ENCODE measurements at regions of chr9 and their contacts with region 1.

Region 1: DNA sequence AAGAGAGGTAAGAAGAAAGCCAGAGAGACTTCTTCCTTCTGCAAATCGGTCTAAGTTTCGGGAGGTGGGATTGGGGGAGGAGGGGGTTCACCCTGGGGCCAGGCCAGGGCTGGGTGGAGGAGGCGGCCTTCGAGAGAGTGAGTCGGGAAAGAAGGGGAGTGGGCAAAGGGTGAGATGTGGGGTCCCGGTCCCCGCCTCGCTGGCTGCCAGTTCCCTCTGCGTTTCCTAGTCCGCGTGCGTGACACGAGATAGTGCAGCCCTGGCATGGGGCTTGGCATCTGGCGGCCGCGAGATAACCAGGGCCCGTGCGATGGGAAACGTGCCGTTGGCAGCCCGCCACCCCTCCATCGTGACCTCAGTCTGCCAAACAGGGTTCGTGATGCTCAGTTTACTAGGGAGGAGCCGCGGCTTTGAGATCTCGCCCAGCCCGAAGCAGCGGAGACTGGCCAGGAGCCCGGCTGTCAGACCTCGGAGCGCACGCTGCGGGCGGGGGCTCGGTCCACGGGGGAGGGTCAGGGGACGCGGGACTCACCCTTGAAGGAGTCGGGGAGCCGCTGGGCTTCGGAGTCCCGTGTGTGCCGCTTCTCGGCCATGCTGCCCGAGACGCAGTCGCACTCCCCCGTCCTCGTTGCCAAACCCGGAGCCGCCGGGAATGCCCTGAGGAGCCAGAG is at the start of gene STOM:
- DNase-seq: peak; percentile 74
- H3K4me3 Mint-ChIP-seq: peak within 1 kb of the TSS; percentile 82
- H3K27ac Mint-ChIP-seq: peak within 1 kb of the TSS; percentile 88
- H3K4me1 Mint-ChIP-seq: peaks cover 31% of the 10 kb centered on the region
- H3K27me3 Mint-ChIP-seq: no peaks in the 10 kb centered on the region
- total RNA-seq, gene STOM: 34.0 to 37.7 TPM

Region 2: DNA sequence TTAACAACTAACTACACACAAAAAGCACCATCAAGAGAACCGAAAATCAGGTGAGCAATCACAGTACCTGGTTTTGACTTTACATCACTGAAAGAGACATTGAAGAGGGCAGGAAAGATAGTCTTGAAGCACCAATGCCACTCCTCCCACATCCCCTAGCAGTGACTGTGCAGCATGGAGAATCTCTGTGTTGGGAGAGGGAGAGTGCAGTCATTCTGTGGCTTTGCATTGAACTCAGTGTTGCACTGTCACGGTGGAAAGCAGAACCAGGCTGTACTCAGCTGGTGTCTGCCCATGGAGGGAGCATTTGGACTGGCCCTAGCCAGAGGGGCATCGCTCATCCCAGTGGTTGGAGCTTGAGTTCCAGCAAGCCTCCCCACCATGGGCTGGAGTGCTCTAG is 360.1 kb before region 1 on chr9:
- CTCF ChIA-PET with region 1: no interaction called
- intact Hi-C with region 1: no loop called
- DNase-seq: peak; percentile 20
- H3K4me3 Mint-ChIP-seq: no peak overlapping the region
- H3K27ac Mint-ChIP-seq: no peak overlapping the region
- H3K4me1 Mint-ChIP-seq: no peaks in the 10 kb centered on the region
- H3K27me3 Mint-ChIP-seq: no peaks in the 10 kb centered on the region

Region 3: DNA sequence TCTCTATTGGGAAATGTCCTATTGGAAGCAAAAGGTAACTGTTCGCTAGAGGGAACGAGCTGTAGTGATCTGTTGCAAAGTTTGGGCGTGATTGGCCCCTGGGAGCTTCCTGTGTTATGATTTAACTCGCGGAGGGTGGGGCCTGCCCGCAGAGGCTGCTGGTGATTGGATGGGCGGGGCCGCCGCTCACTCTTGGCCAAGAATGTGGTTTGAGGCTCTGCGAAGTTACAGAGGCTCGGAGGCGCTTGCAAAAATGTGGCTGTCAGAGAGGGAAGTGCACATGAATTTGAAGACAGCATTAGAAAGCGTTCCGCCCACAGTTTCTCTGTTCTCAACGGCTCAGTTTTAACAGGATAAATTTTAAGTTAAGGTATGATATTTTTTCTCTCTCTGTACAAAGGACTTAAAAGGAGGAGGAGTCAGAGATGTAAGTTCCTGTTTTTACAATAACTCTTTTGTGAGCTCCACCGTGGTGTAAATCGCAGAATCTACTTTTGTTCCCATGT is 248.1 kb before region 1 on chr9:
- CTCF ChIA-PET with region 1: no interaction called
- intact Hi-C with region 1: loop called (anchors 5 kb)
- DNase-seq: peak; percentile 99
- H3K4me3 Mint-ChIP-seq: peak overlapping the region; percentile 73
- H3K27ac Mint-ChIP-seq: peak overlapping the region; percentile 91
- H3K4me1 Mint-ChIP-seq: peaks cover 44% of the 10 kb centered on the region
- H3K27me3 Mint-ChIP-seq: no peaks in the 10 kb centered on the region

Region 4: DNA sequence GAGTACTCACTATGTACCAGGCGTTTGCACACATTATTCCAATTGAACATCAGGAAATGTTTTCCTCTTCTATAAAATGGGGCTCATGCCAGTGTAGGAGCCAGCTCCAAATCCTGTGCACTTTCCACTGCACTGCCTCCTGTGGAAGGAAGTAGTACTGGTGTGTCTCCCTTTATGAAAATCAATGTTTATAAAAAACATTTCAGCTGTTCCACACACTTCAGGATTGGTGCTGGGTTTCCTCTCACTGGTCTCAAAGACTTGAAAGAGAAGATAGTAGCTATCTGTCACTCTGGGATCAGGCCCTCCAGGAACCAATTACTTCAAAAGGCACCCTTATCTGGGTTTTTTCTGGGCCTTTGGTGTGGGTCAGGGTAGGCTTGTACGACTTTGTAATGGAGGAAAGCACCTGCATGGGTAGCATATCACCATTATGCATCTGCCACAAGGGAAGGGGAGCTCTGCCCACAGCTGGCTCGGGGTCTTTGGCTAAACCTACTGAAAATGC is 200.6 kb before region 1 on chr9:
- CTCF ChIA-PET with region 1: no interaction called
- intact Hi-C with region 1: no loop called
- DNase-seq: peak; percentile 36
- H3K4me3 Mint-ChIP-seq: no peak overlapping the region
- H3K27ac Mint-ChIP-seq: peak overlapping the region; percentile 54
- H3K4me1 Mint-ChIP-seq: peaks cover 21% of the 10 kb centered on the region
- H3K27me3 Mint-ChIP-seq: no peaks in the 10 kb centered on the region

Region 5: GRCh38 chr9:121350993-121351561 is 18.7 kb before region 1 on chr9:
- CTCF ChIA-PET with region 1: interaction called, 6 read pairs
- intact Hi-C with region 1: loop called (anchors 1 kb)
- DNase-seq: no peak
- H3K4me3 Mint-ChIP-seq: no peak overlapping the region
- H3K27ac Mint-ChIP-seq: no peak overlapping the region
- H3K4me1 Mint-ChIP-seq: peaks cover 18% of the 10 kb centered on the region
- H3K27me3 Mint-ChIP-seq: no peaks in the 10 kb centered on the region

Region 6: GRCh38 chr9:121399883-121400607 is 30.3 kb after region 1 on chr9:
- CTCF ChIA-PET with region 1: interaction called, 5 read pairs
- intact Hi-C with region 1: loop called (anchors 2 kb)
- DNase-seq: no peak
- H3K4me3 Mint-ChIP-seq: no peak overlapping the region
- H3K27ac Mint-ChIP-seq: no peak overlapping the region
- H3K4me1 Mint-ChIP-seq: no peaks in the 10 kb centered on the region
- H3K27me3 Mint-ChIP-seq: no peaks in the 10 kb centered on the region

Measured in activated naive CD4-positive, alpha-beta T cell treated with anti-CD3 and anti-CD28 coated beads for 36 hours (primary cell).